Spleen (tissue), 13 donors: ENCODE measurements at regions of chrX and their contacts with region 1.

Region 1: DNA sequence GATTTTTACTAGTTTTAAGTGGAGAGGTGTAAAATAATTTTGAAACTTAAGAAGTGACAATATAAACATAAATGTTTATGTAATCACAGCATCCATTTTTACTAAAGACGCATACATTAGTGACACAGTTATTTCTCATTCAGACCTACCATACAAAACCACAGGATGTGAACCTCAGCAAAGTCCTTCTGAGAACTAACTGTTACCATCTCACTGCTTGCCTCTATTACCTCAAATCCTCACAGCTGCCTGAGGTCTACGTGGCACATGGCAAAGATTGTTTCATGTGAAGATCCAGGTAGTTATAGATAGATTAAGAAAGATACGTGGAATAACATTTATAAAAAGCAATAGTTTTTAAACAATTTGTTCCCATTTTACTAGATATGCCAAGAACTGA is 189.0 kb downstream of the SLITRK2 start:
- DNase-seq: no peak
- H3K4me3 ChIP-seq: no peak overlapping the region
- H3K27ac ChIP-seq: no peak overlapping the region
- H3K4me1 ChIP-seq: no peaks in the 10 kb centered on the region
- H3K27me3 ChIP-seq: no peaks in the 10 kb centered on the region
- CTCF ChIP-seq: no peak
- POLR2A ChIP-seq: no peak

Region 2: GRCh38 chrX:145953628-145954027 is 53.0 kb before region 1 on chrX:
- intact Hi-C with region 1: loop called (anchors 10 kb)
- DNase-seq: no peak
- H3K4me3 ChIP-seq: no peak overlapping the region
- H3K27ac ChIP-seq: no peak overlapping the region
- H3K4me1 ChIP-seq: no peaks in the 10 kb centered on the region
- H3K27me3 ChIP-seq: no peaks in the 10 kb centered on the region
- CTCF ChIP-seq: no peak
- POLR2A ChIP-seq: no peak

Region 3: DNA sequence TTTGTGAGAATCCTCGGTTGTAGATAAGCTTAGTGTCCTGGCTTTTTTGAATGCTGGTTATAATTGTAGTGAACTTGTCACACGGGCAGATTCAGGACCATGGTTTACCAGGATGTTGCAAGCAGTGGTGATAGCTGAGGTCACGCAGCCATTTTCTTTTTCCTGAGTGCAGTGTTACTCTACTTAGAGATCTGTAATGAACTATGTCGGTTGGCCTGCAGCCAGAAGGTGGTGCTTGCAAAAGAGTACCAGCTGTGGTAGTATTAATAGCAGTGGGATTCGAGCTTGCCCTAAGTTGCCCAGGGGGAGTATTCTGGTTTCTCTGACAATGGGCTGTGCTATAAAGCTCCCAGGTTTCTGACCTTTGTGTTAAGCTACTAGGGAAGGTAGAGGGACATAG is 179.9 kb after region 1 on chrX:
- intact Hi-C with region 1: no loop called
- DNase-seq: no peak
- H3K4me3 ChIP-seq: no peak overlapping the region
- H3K27ac ChIP-seq: no peak overlapping the region
- H3K4me1 ChIP-seq: no peaks in the 10 kb centered on the region
- H3K27me3 ChIP-seq: no peaks in the 10 kb centered on the region
- CTCF ChIP-seq: no peak
- POLR2A ChIP-seq: no peak